Psoas muscle (tissue), 8 donors: ENCODE measurements at regions of chr4 and their contacts with region 1.

Region 1: DNA sequence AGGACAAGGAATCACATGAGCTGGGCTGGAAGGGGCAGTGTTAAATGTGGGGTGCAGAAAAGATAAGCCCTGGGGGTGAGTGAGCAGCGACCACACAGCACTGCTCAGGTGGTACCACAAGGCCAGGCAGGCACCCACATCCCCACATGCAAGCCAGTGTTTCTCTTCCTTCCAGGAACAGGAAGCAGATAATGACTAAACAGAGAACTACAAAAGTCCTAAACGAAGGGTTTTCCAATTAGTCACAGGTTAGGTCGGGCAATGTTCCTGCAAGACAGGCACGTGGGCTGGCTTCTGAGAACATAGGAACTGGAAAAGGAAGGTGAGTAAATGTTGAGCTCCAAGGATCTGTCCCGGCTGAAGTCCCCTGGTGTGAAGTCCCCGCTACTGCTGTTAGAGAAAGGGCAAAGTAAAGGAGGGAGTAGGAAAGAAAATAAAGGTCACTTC is 19.5 kb downstream of the RELL1 start:
- DNase-seq: peak; percentile 50 to 67
- ATAC-seq: peak; percentile 91 to 96 (median 92)
- H3K4me3 ChIP-seq: no peak overlapping the region
- H3K27ac ChIP-seq: peak overlapping the region; percentile 78
- H3K4me1 ChIP-seq: peaks cover 59% of the 10 kb centered on the region
- H3K27me3 ChIP-seq: no peaks in the 10 kb centered on the region
- CTCF ChIP-seq: peak; percentile 28

Region 2: DNA sequence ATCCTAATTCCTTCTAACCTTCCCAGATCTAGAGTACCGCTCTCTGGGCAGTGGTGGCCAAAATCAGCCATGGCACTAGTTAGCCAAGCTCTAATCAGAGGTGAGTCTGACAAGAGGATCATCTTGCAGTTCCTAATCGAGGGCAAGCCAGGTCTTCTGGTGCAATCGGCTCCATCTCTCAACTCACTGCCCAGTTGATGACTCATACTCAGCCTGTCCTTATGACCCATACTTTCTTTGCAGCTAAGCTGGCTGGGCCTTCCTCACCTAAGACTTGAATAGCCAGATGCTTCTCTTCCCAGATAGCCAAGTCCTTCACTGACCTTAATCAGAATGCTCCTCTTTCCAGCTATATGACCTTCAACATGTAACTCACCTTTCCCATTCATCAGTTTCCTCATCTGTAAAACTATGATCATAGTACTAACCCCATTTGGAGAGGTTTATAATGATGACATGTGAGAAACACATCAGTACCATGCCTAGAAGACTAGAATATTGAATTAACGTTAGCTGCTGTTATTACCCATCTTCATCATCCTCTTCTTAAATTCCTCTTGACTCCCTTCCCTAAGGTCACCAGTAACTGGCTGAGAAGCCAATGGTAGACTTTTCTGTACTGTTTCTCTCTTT is 37.6 kb before region 1 on chr4:
- intact Hi-C with region 1: loop called (anchors 5 kb)
- DNase-seq: peak; percentile 64 to 81
- ATAC-seq: peak; percentile 99 to 100 (median 100)
- H3K4me3 ChIP-seq: no peak overlapping the region
- H3K27ac ChIP-seq: peak overlapping the region; percentile 40
- H3K4me1 ChIP-seq: peaks cover 28% of the 10 kb centered on the region
- H3K27me3 ChIP-seq: no peaks in the 10 kb centered on the region
- CTCF ChIP-seq: no peak

Region 3: DNA sequence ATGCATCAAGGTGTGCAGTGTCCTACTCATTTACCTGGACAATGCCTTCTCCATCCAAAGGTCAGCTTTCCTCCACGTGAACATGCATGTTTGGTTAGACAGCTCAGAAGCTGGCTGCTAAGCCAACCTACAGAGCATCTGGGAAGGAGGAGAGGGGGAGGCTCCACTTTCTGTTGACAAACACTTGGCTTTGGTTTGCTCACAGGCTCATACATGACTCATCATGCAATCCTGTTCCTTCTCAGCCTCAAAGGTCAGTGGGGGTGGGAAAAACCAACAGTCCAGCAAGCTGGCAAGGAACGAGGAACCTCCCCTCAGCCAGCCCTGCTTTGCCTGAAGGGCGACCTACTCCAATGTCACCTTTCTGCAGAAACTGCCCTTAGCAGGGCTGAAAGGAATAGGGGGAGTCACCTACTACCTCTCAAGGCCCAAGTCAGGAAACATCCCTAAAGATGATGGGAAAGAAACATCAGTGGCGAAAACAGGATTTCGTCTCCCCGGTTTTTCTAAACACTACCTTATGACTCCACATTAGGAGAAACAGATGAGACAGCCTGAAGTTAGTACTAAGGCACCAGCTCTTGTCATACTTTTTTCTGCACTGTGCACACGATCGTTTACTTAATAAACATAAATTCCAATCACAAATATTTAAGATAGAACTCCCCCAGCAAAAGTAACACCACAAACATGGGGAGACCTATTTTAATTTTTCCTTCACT is 18.4 kb before region 1 on chr4:
- intact Hi-C with region 1: loop called in 1 of 2 experiments (anchors 2 kb)
- DNase-seq: peak; percentile 58 to 82
- ATAC-seq: peak; percentile 98 to 99 (median 98)
- H3K4me3 ChIP-seq: no peak overlapping the region
- H3K27ac ChIP-seq: peak overlapping the region; percentile 62
- H3K4me1 ChIP-seq: peaks cover 18% of the 10 kb centered on the region
- H3K27me3 ChIP-seq: no peaks in the 10 kb centered on the region
- CTCF ChIP-seq: no peak

Region 4: GRCh38 chr4:37686373-37687193 is 19.9 kb after region 1 on chr4 and contains the start of gene RELL1:
- intact Hi-C with region 1: loop called in 1 of 2 experiments (anchors 1 kb)
- DNase-seq: peak; percentile 99 to 100
- ATAC-seq: peak; percentile 93 to 97 (median 94)
- H3K4me3 ChIP-seq: peak within 1 kb of the TSS; percentile 98
- H3K27ac ChIP-seq: peak within 1 kb of the TSS; percentile 99
- H3K4me1 ChIP-seq: peaks cover 31% of the 10 kb centered on the region
- H3K27me3 ChIP-seq: no peaks in the 10 kb centered on the region
- CTCF ChIP-seq: no peak
- total RNA-seq, gene RELL1: 21.0 to 35.7 (median 25.1) TPM

Region 5: GRCh38 chr4:38396845-38397547 is 730.3 kb after region 1 on chr4:
- intact Hi-C with region 1: no loop called
- DNase-seq: no peak
- ATAC-seq: no peak
- H3K4me3 ChIP-seq: no peak overlapping the region
- H3K27ac ChIP-seq: no peak overlapping the region
- H3K4me1 ChIP-seq: no peaks in the 10 kb centered on the region
- H3K27me3 ChIP-seq: no peaks in the 10 kb centered on the region
- CTCF ChIP-seq: no peak